ENCODE measurements at regions of chr10 and their contacts with region 1.

Region 1: GRCh38 chr10:70115948-70116682 is 16.5 kb downstream of the AIFM2 start:
- H3K4me3 ChIP-seq: no peak overlapping the region
- H3K27ac ChIP-seq: no peak overlapping the region
- H3K4me1 ChIP-seq: no peaks in the 10 kb centered on the region; the same call in 1 of the 2 replicates
- CTCF ChIP-seq: peak; percentile 76

Region 2: GRCh38 chr10:70096705-70097420 is 19.3 kb before region 1 on chr10:
- CTCF ChIA-PET with region 1: interaction called, 17 read pairs
- POLR2A ChIA-PET with region 1: no interaction called
- H3K4me3 ChIP-seq: no peak overlapping the region
- H3K27ac ChIP-seq: no peak overlapping the region
- H3K4me1 ChIP-seq: no peaks in the 10 kb centered on the region
- CTCF ChIP-seq: no peak

Region 3: GRCh38 chr10:70132098-70133029 is 16.2 kb after region 1 on chr10 and contains the start of gene AIFM2:
- CTCF ChIA-PET with region 1: interaction called, 19 read pairs
- POLR2A ChIA-PET with region 1: no interaction called
- H3K4me3 ChIP-seq: peak within 1 kb of the TSS; percentile 55
- H3K27ac ChIP-seq: peak within 1 kb of the TSS; percentile 52; the same call in 1 of the 2 replicates
- H3K4me1 ChIP-seq: no peaks in the 10 kb centered on the region
- CTCF ChIP-seq: peak; percentile 46; the same call in 1 of the 2 replicates

Region 4: DNA sequence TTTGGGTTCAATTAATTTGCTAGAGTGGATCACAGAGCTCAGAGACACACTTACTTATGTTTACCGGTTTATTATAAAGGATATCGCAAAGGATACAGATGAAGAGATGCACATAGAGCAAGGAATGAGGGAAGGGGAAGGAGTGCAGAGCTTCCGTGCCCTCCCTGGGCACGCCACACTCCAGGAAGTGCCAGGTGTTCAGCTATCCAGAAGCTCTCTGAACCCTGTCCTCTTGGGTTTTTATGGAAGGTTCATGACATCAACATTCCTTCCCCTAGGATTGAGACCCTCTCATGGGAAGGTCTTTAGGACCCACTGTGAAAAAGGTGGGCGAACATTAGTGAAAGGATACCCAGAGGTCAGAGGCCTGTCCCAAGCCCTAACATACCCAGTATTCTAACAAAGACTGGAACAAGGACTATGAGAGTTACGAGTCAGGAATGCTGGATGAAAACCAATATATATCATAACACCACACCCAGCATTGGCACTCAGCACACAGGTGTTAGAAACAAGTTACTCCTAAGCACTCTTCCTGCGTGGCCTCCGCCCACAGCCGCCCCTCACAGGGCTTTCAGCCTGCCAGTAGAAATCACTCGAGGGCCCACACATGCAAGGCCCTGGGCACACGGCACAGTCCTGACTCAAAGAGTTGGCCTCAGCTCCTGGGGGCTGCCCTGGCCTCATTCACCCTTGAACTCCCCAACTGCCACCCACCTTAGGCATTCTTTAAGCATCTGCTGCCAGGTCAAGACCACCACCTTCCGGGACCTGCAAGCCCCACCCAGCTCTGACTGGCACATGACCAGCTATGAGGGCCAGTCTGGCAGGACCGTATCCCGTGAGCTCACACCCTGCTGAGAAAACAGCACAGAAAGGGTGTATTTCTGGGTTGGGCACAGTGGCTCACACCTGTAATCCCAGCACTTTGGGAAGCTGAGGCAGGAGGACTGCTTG is 22.1 kb after region 1 on chr10:
- CTCF ChIA-PET with region 1: interaction called, 15 read pairs
- POLR2A ChIA-PET with region 1: no interaction called
- H3K4me3 ChIP-seq: no peak overlapping the region
- H3K27ac ChIP-seq: no peak overlapping the region
- H3K4me1 ChIP-seq: no peaks in the 10 kb centered on the region
- CTCF ChIP-seq: no peak

Region 5: DNA sequence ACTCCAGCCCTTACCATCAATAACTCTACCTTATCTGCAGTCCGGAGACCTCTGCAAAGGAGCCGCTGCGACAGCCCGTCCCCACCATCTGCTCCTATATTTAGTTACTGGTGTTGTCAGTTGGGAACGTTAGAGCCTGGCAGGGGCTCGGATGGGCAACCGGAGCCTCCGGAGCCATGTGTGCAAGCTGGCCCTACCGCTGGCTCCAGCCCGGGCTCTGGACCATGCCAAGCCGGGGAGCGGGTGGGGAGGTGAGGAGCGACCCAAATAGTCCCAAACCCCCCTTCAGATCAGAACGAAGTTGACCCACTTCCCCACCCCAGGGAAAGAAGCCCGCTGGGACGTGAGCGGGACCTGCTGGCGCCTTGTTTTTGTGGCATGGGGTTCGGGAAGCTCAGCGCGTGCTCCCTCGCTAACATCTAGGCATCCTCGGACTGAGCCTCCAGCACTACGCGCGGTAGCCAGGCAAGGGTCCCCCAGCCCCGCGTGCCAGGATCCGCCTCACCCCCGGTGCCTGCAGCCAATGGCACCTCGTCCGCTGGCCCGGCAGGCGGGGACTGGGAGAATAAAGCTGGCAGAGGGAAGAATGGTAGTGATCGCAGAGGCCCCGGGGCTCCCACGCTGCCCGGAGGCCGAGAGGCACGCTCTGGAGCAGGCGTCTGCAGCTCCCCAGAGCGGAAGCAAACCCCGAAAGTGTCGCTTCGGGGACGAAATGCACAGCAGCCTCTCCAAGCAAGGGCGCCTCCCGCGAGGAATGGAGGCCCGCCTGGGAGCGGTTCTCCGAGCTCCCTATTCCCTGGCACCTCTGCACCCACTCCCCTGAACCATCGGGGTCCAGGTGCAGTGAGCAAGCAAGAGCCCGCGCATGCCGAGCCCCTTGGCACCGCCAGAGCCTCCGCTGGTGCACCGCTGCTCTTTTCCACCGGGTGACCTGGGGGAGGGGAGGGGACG is 265.6 kb after region 1 on chr10:
- CTCF ChIA-PET with region 1: interaction called, 18 read pairs
- POLR2A ChIA-PET with region 1: no interaction called
- H3K4me3 ChIP-seq: peak overlapping the region; percentile 57
- H3K27ac ChIP-seq: peak overlapping the region; percentile 46; the same call in 1 of the 2 replicates
- H3K4me1 ChIP-seq: peaks cover 3% of the 10 kb centered on the region; the same call in 1 of the 2 replicates
- CTCF ChIP-seq: no peak

Region 6: GRCh38 chr10:70396140-70396539 is 280.0 kb after region 1 on chr10:
- CTCF ChIA-PET with region 1: no interaction called
- POLR2A ChIA-PET with region 1: no interaction called
- H3K4me3 ChIP-seq: no peak overlapping the region
- H3K27ac ChIP-seq: no peak overlapping the region
- H3K4me1 ChIP-seq: no peaks in the 10 kb centered on the region
- CTCF ChIP-seq: no peak

Region 7: GRCh38 chr10:70518695-70519094 is 402.6 kb after region 1 on chr10:
- CTCF ChIA-PET with region 1: no interaction called
- POLR2A ChIA-PET with region 1: no interaction called
- H3K4me3 ChIP-seq: no peak overlapping the region
- H3K27ac ChIP-seq: no peak overlapping the region
- H3K4me1 ChIP-seq: no peaks in the 10 kb centered on the region; the same call in 1 of the 2 replicates
- CTCF ChIP-seq: no peak

Measured in HEK293 (cell line).